ENCODE measurements at regions of chr6 and their contacts with region 1.

Region 1: GRCh38 chr6:117976030-117976651 is 69.1 kb downstream of the SLC35F1 start:
- DNase-seq: peak in 1 of 3 donors; percentile 2
- H3K4me3 ChIP-seq: no peak overlapping the region
- H3K4me3 Mint-ChIP-seq: no peak overlapping the region
- H3K27ac ChIP-seq: no peak overlapping the region
- H3K27ac Mint-ChIP-seq: no peak overlapping the region
- H3K4me1 ChIP-seq: no peaks in the 10 kb centered on the region
- H3K4me1 Mint-ChIP-seq: no peaks in the 10 kb centered on the region
- H3K27me3 ChIP-seq: no peaks in the 10 kb centered on the region
- H3K27me3 Mint-ChIP-seq: peaks cover 0 to 6% (median 4%) of the 10 kb centered on the region in 3 donors
- CTCF ChIP-seq: peak; percentile 58

Region 2: GRCh38 chr6:117992856-117993255 is 16.7 kb after region 1 on chr6:
- intact Hi-C with region 1: loop called in 1 of 2 experiments (anchors 1 kb)
- DNase-seq: no peak
- H3K4me3 ChIP-seq: no peak overlapping the region
- H3K4me3 Mint-ChIP-seq: no peak overlapping the region
- H3K27ac ChIP-seq: no peak overlapping the region
- H3K27ac Mint-ChIP-seq: no peak overlapping the region
- H3K4me1 ChIP-seq: no peaks in the 10 kb centered on the region
- H3K4me1 Mint-ChIP-seq: no peaks in the 10 kb centered on the region
- H3K27me3 ChIP-seq: no peaks in the 10 kb centered on the region
- H3K27me3 Mint-ChIP-seq: no peaks in the 10 kb centered on the region
- CTCF ChIP-seq: no peak

Region 3: DNA sequence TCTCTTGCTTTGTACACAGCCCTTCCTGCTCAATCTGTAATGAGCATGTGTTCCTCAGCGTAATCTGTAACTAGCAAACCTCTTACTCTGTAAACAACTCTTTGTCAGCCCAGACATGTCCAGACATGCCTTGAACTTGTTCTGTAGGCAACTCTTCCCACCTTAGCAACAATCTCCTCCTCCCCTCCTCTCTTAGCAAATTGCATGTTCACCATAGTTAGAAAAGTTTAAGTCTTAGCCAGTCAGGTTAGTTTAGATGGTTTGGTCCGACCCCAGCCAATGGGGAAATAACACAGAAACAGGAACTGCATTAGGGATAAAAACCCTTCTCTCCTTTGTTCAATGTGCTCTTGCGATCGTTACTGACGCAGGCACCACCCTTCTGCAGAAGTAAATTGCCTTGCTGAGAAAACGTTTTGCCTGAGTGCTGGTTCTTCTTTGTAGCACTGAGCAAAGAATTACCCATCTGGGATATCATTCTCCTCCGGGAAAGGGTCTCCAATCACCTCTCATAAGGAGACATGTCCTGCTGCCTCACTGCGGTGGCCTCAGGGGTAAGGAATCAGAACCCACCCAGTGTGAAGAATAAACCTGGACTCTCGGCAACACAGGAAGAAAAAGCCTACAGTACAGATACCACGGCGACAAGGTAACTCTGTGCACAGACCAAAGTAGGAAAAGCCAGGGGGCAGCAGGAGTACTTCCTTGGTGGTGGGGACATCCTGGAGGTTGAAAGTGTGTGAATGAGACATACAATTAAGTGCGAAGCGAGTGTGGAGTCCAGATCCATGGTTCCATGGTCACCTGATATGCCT is 598.1 kb after region 1 on chr6:
- intact Hi-C with region 1: loop called in 1 of 2 experiments (anchors 10 kb)
- DNase-seq: no peak
- H3K4me3 ChIP-seq: peak overlapping the region in 1 of 3 experiments; percentile 15
- H3K4me3 Mint-ChIP-seq: no peak overlapping the region
- H3K27ac ChIP-seq: no peak overlapping the region
- H3K27ac Mint-ChIP-seq: peak overlapping the region in 1 of 7 donors; percentile 64
- H3K4me1 ChIP-seq: peaks cover 0 to 5% of the 10 kb centered on the region in 2 donors
- H3K4me1 Mint-ChIP-seq: peaks cover 6% of the 10 kb centered on the region
- H3K27me3 ChIP-seq: no peaks in the 10 kb centered on the region
- H3K27me3 Mint-ChIP-seq: peaks cover 0 to 2% (median 0%) of the 10 kb centered on the region in 3 donors
- CTCF ChIP-seq: no peak